AG04449 (cell line): ENCODE measurements at regions of chr10 and their contacts with region 1.

Region 1: GRCh38 chr10:122298598-122299301 is 27.7 kb downstream of the BTBD16 start:
- DNase-seq: no peak
- H3K4me3 ChIP-seq: peak overlapping the region; percentile 43
- CTCF ChIP-seq: peak; percentile 89

Region 2: DNA sequence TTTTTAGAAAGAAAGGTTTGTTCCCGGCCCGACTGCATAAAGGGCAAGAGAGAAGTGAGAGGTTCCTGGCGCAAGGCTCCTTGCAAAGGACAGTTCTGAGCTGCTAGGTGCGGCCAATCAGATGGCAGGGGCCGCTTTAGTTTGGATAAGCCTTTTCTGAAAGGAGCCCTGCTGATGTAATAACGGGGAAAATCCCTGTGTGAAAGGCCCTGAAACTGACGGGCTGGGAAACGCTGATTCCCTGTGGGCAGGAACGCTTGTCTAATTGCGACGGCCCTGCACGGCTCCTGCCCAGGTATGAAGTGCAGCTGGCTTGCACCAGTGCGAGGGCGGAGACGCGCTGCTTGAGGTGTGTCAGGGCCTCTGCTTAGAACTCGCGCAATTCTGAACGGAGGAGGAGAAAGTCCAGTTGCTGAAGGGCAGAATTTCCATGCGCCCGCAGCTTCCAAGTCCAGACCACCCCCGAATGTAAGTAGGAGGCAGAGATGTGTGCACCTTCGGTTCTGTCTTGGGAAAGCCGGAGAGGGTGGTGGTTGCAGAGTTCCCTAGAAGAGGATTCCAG is 279.3 kb before region 1 on chr10:
- CTCF ChIA-PET with region 1: no interaction called
- POLR2A ChIA-PET with region 1: no interaction called
- DNase-seq: no peak
- H3K4me3 ChIP-seq: no peak overlapping the region
- CTCF ChIP-seq: no peak

Region 3: GRCh38 chr10:122267849-122268737 is 30.7 kb before region 1 on chr10:
- CTCF ChIA-PET with region 1: interaction called, 10 read pairs
- POLR2A ChIA-PET with region 1: no interaction called
- DNase-seq: no peak
- H3K4me3 ChIP-seq: no peak overlapping the region
- CTCF ChIP-seq: peak; percentile 95

Region 4: DNA sequence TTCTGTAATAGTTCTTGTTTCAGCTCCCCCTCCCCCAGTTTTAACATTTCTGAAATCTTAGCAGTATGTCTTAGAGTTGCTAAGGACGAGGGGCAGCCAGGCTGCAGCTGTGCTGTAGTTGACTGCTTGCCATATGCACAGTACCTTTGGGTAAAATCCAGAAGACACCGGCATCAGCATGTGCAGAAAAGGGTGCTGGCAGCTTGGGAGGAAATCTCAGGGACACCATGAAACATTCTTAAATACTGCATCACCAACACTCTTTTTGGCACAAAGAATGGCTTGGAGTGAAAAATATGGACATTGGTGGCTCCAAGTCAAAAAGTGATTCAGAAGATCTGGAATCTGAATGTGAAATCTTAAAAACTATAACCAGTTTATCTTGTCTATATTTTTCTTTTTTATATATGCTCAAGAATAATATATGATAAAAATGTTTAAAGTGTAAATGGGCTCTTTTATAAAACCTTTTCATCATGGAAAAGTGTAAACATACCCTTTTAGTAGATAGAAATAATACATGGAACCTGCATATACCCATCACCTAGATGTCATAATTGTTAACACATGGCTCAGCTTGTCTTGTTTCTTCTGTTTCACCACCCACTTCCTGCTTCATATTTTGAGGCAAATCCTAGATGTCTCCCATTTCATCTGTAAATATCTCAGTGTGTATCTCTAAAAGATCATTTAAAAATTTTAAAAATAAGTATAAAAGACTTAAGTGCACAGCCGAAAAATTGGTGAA is 121.3 kb after region 1 on chr10:
- CTCF ChIA-PET with region 1: interaction called, 24 read pairs
- POLR2A ChIA-PET with region 1: no interaction called
- DNase-seq: no peak
- H3K4me3 ChIP-seq: no peak overlapping the region
- CTCF ChIP-seq: no peak

Region 5: GRCh38 chr10:122468926-122469781 is 170.4 kb after region 1 on chr10:
- CTCF ChIA-PET with region 1: interaction called, 11 read pairs
- POLR2A ChIA-PET with region 1: interaction called, 3 read pairs
- DNase-seq: peak; percentile 97
- H3K4me3 ChIP-seq: no peak overlapping the region
- CTCF ChIP-seq: no peak